OCI-LY7 (cell line): ENCODE measurements at regions of chr5 and their contacts with region 1.

Region 1: DNA sequence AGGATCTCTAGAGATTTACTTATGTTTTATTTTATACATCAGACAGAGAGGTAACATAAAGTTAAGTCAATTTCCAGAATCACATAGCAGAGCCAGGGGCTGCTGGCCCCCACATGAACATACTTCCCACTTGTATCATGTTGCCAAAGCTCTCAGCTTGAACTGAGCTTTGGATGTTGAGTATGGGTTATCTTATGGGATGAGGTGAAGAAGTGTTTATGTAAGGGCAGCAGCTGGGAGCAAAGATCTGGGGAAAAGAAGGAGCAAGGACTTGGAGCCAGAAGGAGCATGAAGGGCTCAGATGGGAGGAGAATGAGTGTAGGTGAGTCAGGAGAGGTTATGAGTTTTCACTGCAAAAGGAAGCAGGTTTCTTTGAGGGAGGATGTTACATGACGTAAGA is 72.0 kb downstream of the MROH2B start:
- DNase-seq: no peak
- H3K4me3 ChIP-seq: no peak overlapping the region
- H3K27ac ChIP-seq: no peak overlapping the region
- H3K4me1 ChIP-seq: no peaks in the 10 kb centered on the region
- CTCF ChIP-seq: no peak

Region 2: DNA sequence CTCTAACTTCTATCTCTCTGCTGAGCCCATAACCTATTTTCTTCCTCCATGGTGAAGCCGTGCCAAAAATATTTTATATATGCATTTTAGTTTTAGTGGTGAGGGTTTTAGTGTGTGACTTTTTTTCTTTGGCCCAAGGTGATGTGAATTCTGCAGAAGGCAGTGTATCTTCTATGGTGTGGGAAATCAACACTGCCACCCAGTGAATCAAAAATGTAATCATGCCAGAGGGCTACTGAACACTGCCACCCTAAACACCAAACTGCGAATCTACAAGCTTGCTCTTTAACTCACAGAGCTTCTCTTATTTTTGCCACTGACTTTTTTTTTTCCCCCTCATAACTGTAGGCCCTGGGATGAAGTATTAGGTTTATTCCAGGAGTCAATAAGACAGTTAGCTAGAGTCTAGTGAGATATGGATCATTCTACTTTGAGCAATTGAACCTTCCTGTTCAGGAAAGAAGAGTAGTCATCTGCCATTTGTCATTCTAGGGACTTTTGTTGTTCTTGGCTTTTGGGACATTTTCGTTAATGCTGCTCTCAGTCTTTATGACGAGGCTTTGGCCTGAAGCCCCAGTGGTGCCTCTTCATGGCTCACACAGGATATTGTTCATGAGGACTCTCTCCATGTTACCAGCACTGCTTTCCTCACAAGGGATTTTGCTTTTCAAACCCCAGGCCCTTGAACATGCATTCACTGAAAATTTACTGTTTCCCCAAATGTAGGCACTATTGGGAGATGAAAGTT is 36.8 kb before region 1 on chr5:
- CTCF ChIA-PET with region 1: no interaction called
- POLR2A ChIA-PET with region 1: no interaction called
- intact Hi-C with region 1: loop called (anchors 1 kb)
- DNase-seq: no peak
- H3K4me3 ChIP-seq: no peak overlapping the region
- H3K27ac ChIP-seq: no peak overlapping the region
- H3K4me1 ChIP-seq: no peaks in the 10 kb centered on the region
- CTCF ChIP-seq: peak; percentile 30; the same call in 1 of the 2 replicates